ENCODE measurements at regions of chr6 and their contacts with region 1.

Region 1: GRCh38 chr6:15621203-15622044 is 41.4 kb downstream of the DTNBP1 start:
- DNase-seq: peak; percentile 37 to 96 (median 64)
- ATAC-seq: peak; percentile 99
- H3K4me3 ChIP-seq: no peak overlapping the region
- H3K27ac ChIP-seq: peak overlapping the region; percentile 85
- H3K4me1 ChIP-seq: peaks cover 4 to 33% of the 10 kb centered on the region in 2 experiments
- H3K27me3 ChIP-seq: no peaks in the 10 kb centered on the region
- CTCF ChIP-seq: no peak
- EP300 ChIP-seq: peak; percentile 39; the same call in 1 of the 2 replicates
- POLR2A ChIP-seq: peak; percentile 78
- RAD21 ChIP-seq: peak in 1 of 2 experiments; percentile 51; a peak in 2 of 4 replicates

Region 2: GRCh38 chr6:14932485-14933155 is 688.8 kb before region 1 on chr6:
- CTCF ChIA-PET with region 1: no interaction called
- POLR2A ChIA-PET with region 1: no interaction called
- in situ Hi-C with region 1: no loop called
- intact Hi-C with region 1: loop called (anchors 5 kb)
- DNase-seq: peak; percentile 26 to 88 (median 64)
- ATAC-seq: peak; percentile 97
- H3K4me3 ChIP-seq: no peak overlapping the region
- H3K27ac ChIP-seq: peak overlapping the region; percentile 34; the same call in 2 of the 3 replicates
- H3K4me1 ChIP-seq: peaks cover 20% of the 10 kb centered on the region in 2 experiments
- H3K27me3 ChIP-seq: no peaks in the 10 kb centered on the region
- CTCF ChIP-seq: peak in 2 of 3 experiments; percentile 3 to 6; a peak in 1 of 6 replicates
- EP300 ChIP-seq: peak; percentile 84
- POLR2A ChIP-seq: no peak
- RAD21 ChIP-seq: peak; percentile 11 to 24; a peak in 2 of 4 replicates

Region 3: GRCh38 chr6:15491255-15491985 is 130.0 kb before region 1 on chr6:
- CTCF ChIA-PET with region 1: interaction called, 8 read pairs
- POLR2A ChIA-PET with region 1: no interaction called
- in situ Hi-C with region 1: no loop called
- intact Hi-C with region 1: loop called (anchors 1 kb)
- DNase-seq: peak; percentile 66 to 78 (median 71)
- ATAC-seq: peak; percentile 93
- H3K4me3 ChIP-seq: no peak overlapping the region
- H3K27ac ChIP-seq: no peak overlapping the region
- H3K4me1 ChIP-seq: peaks cover 2 to 5% of the 10 kb centered on the region in 2 experiments; a peak in 3 of 5 replicates
- H3K27me3 ChIP-seq: no peaks in the 10 kb centered on the region
- CTCF ChIP-seq: peak; percentile 85 to 91 (median 88)
- EP300 ChIP-seq: 0 out of 2 replicates have a peak, but pooled peaks have one; percentile 11
- POLR2A ChIP-seq: no peak
- RAD21 ChIP-seq: peak; percentile 81 to 91

Region 4: GRCh38 chr6:15551798-15552197 is 69.6 kb before region 1 on chr6:
- CTCF ChIA-PET with region 1: no interaction called
- POLR2A ChIA-PET with region 1: no interaction called
- in situ Hi-C with region 1: no loop called
- intact Hi-C with region 1: loop called (anchors 2 kb)
- DNase-seq: peak in 1 of 4 experiments; percentile 44
- ATAC-seq: no peak
- H3K4me3 ChIP-seq: no peak overlapping the region
- H3K27ac ChIP-seq: no peak overlapping the region
- H3K4me1 ChIP-seq: peaks cover 20 to 50% of the 10 kb centered on the region in 2 experiments
- H3K27me3 ChIP-seq: no peaks in the 10 kb centered on the region
- CTCF ChIP-seq: no peak
- EP300 ChIP-seq: no peak
- POLR2A ChIP-seq: no peak
- RAD21 ChIP-seq: peak; percentile 7 to 24; a peak in 2 of 4 replicates

Region 5: GRCh38 chr6:15608396-15608795 is 13.0 kb before region 1 on chr6:
- CTCF ChIA-PET with region 1: no interaction called
- POLR2A ChIA-PET with region 1: interaction called, 15 read pairs
- in situ Hi-C with region 1: no loop called
- intact Hi-C with region 1: no loop called
- DNase-seq: no peak
- ATAC-seq: no peak
- H3K4me3 ChIP-seq: no peak overlapping the region
- H3K27ac ChIP-seq: no peak overlapping the region
- H3K4me1 ChIP-seq: peaks cover 5% of the 10 kb centered on the region in 2 experiments
- H3K27me3 ChIP-seq: no peaks in the 10 kb centered on the region
- CTCF ChIP-seq: no peak
- EP300 ChIP-seq: no peak
- POLR2A ChIP-seq: no peak
- RAD21 ChIP-seq: no peak

Measured in K562 (cell line).